H1 (cell line): ENCODE measurements at regions of chr22 and their contacts with region 1.

Region 1: DNA sequence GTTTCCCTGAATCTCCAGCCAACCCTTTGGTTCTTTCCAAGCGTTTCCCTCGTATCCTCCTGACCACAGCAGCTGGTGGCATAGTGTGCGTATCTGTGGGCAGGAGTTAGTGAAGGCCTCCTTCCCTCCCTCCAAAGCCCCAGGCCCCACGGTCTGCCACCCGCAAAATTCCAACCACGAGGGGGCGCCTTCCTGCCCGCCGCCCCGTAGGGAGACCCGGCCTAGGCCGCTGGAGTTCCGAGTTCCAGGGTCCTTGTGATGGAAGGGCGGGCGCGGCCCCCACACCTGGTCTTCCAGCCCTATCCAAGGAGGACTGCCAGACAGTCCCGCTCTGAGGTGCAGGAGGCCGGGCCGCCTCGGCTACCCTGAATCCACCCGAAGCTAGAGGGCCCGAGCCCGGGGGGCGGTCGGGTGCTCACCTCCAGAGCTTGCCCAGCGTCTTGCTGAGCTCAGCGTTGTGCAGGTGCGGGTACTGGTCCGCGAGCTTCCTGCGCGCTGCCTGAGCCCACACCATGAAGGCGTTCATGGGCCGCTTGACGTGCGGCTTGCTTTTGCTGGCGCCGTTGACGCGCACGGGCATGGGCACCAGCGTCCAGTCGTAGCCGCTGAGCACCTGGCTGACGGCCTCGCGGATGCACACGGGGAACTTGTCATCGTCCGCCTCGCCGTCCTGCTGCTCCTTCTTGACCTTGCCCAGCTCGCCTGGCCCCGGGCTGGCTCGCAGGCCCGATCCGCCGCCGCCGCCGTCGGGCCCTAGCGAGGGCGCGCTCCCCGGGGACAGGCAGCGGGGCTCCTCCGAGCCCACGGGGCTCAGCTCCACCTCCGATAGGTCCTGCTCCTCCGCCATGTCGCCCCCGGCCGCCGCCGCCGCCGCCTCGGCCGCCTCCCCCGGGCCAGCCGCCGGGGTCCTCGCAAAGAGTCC is 1.2 kb downstream of the SOX10 start:
- DNase-seq: peak in 1 of 2 experiments; percentile 96
- H3K4me3 ChIP-seq: peak overlapping the region; percentile 24 to 55 (median 40)
- H3K27ac ChIP-seq: no peak overlapping the region
- H3K4me1 ChIP-seq: peaks cover 0 to 30% (median 14%) of the 10 kb centered on the region in 4 experiments; a peak in 6 of 7 replicates
- H3K27me3 ChIP-seq: peaks cover 0 to 19% (median 12%) of the 10 kb centered on the region in 4 experiments; a peak in 5 of 7 replicates
- CTCF ChIP-seq: peak; percentile 76 to 81 (median 79)
- EP300 ChIP-seq: no peak
- POLR2A ChIP-seq: no peak
- RAD21 ChIP-seq: peak; percentile 39 to 58; a peak in 3 of 4 replicates

Region 2: GRCh38 chr22:37824674-37825641 is 158.2 kb before region 1 on chr22:
- CTCF ChIA-PET with region 1: no interaction called
- POLR2A ChIA-PET with region 1: no interaction called
- DNase-seq: peak in 1 of 2 experiments; percentile 72
- H3K4me3 ChIP-seq: peak overlapping the region; percentile 24 to 57 (median 44)
- H3K27ac ChIP-seq: no peak overlapping the region
- H3K4me1 ChIP-seq: peaks cover 5 to 25% (median 15%) of the 10 kb centered on the region in 4 experiments
- H3K27me3 ChIP-seq: peaks cover 8 to 30% (median 25%) of the 10 kb centered on the region in 4 experiments
- CTCF ChIP-seq: peak; percentile 55 to 78 (median 58)
- EP300 ChIP-seq: no peak
- POLR2A ChIP-seq: peak in 1 of 2 experiments; percentile 40; a peak in 1 of 3 replicates
- RAD21 ChIP-seq: peak in 1 of 2 experiments; percentile 26; a peak in 1 of 4 replicates

Region 3: DNA sequence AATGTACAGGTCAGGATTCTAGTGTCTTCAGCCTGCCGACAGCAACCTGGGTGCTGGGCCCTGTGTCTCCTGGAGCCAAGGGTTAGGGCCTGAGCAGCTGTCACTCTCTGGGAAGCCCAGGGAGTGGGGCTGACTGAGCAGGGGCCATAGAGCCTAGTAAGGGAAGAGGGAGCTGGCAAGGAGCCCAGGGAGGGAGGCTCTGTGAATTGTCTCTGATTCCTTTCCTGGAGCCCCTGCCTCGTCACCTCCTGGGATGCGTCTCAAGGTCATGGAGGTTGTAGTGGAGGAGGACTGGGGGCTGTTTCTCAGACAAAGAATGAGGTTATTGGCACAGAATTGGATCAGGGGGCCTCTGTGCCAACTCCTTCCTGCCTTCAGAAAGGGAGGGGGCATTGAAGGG is 10.7 kb before region 1 on chr22:
- CTCF ChIA-PET with region 1: interaction called, 27 read pairs
- POLR2A ChIA-PET with region 1: interaction called, 26 read pairs
- DNase-seq: no peak
- H3K4me3 ChIP-seq: no peak overlapping the region
- H3K27ac ChIP-seq: 0 out of 2 replicates have a peak overlapping the region, but pooled peaks have one; percentile 11
- H3K4me1 ChIP-seq: peaks cover 6 to 20% (median 11%) of the 10 kb centered on the region in 4 experiments
- H3K27me3 ChIP-seq: no peaks in the 10 kb centered on the region
- CTCF ChIP-seq: no peak
- EP300 ChIP-seq: no peak
- POLR2A ChIP-seq: no peak
- RAD21 ChIP-seq: no peak

Region 4: GRCh38 chr22:37999956-38000272 is 16.7 kb after region 1 on chr22:
- CTCF ChIA-PET with region 1: interaction called, 20 read pairs
- POLR2A ChIA-PET with region 1: interaction called, 8 read pairs
- DNase-seq: no peak
- H3K4me3 ChIP-seq: no peak overlapping the region
- H3K27ac ChIP-seq: no peak overlapping the region
- H3K4me1 ChIP-seq: peaks cover 0 to 23% (median 8%) of the 10 kb centered on the region in 4 experiments; a peak in 5 of 7 replicates
- H3K27me3 ChIP-seq: no peaks in the 10 kb centered on the region; a peak in 1 of 7 replicates
- CTCF ChIP-seq: no peak
- EP300 ChIP-seq: no peak
- POLR2A ChIP-seq: no peak
- RAD21 ChIP-seq: no peak

Region 5: DNA sequence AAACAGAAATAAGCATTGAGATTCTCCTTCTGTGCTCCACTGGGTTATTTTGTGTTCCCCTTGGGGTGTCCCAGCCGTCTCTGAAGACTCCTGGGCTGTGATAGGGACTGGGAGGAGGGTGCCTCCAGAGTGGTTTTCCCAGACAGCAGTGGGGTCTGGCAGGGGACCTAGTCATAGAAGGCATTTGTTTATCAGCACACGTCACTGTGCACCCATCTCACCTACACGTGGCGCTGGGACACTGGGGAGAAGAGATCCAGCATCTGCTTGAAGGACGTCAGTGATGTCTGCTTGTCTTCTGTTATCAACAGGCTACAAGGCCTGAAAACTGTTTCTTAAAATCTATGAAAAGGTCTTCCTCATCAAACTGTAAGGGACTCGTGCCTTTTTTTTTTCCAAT is 39.8 kb after region 1 on chr22:
- CTCF ChIA-PET with region 1: no interaction called
- POLR2A ChIA-PET with region 1: no interaction called
- DNase-seq: no peak
- H3K4me3 ChIP-seq: no peak overlapping the region
- H3K27ac ChIP-seq: no peak overlapping the region
- H3K4me1 ChIP-seq: peaks cover 0 to 9% (median 4%) of the 10 kb centered on the region in 4 experiments; a peak in 3 of 7 replicates
- H3K27me3 ChIP-seq: peaks cover 0 to under 1% (median 0%) of the 10 kb centered on the region in 4 experiments; a peak in 1 of 7 replicates
- CTCF ChIP-seq: no peak
- EP300 ChIP-seq: no peak
- POLR2A ChIP-seq: no peak
- RAD21 ChIP-seq: no peak

Region 6: DNA sequence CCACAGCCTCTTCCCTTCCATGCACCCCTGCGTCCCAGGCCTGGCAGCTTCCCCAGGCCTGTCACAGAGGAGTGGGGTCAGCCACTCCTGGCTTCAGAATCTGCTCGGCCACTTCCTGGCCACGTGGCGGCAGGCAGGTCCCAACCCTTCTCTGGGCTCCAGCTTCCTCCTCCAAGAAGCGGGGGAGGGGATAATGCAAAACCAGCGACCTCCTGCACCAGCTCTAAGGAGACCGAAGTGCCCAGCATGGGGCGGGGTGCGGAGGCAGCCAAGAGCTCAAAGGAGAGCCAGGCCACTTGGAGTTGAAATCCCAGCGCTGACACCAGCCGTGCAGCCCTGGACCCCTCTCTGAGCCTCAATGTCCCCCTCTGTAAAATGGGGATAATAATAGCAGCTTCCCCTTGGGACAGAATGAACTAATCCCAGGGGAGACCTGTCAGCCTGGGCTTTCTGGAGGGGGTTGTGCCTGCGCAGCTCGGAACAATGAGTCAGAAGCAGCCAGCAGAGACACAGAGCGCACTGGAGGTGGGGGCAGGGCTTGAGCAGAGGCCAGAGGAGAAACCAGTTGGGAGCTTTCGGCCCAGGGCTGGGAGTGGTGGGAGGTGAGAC is 51.2 kb after region 1 on chr22:
- CTCF ChIA-PET with region 1: interaction called, 11 read pairs
- POLR2A ChIA-PET with region 1: no interaction called
- DNase-seq: peak; percentile 56 to 70
- H3K4me3 ChIP-seq: peak overlapping the region in 2 of 4 experiments; percentile 4 to 19; a peak in 2 of 8 replicates
- H3K27ac ChIP-seq: peak overlapping the region; percentile 61; the same call in 1 of the 2 replicates
- H3K4me1 ChIP-seq: peaks cover 0 to 33% (median 22%) of the 10 kb centered on the region in 4 experiments; a peak in 6 of 7 replicates
- H3K27me3 ChIP-seq: peaks cover 0 to 4% (median under 1%) of the 10 kb centered on the region in 4 experiments; a peak in 1 of 7 replicates
- CTCF ChIP-seq: 0 out of 4 replicates have a peak, but pooled peaks of 1 of the 3 experiments have one; percentile 2
- EP300 ChIP-seq: 0 out of 3 replicates have a peak, but pooled peaks of 1 of the 2 experiments have one; percentile 20
- POLR2A ChIP-seq: no peak
- RAD21 ChIP-seq: peak; percentile 7 to 33; a peak in 1 of 4 replicates

Region 7: DNA sequence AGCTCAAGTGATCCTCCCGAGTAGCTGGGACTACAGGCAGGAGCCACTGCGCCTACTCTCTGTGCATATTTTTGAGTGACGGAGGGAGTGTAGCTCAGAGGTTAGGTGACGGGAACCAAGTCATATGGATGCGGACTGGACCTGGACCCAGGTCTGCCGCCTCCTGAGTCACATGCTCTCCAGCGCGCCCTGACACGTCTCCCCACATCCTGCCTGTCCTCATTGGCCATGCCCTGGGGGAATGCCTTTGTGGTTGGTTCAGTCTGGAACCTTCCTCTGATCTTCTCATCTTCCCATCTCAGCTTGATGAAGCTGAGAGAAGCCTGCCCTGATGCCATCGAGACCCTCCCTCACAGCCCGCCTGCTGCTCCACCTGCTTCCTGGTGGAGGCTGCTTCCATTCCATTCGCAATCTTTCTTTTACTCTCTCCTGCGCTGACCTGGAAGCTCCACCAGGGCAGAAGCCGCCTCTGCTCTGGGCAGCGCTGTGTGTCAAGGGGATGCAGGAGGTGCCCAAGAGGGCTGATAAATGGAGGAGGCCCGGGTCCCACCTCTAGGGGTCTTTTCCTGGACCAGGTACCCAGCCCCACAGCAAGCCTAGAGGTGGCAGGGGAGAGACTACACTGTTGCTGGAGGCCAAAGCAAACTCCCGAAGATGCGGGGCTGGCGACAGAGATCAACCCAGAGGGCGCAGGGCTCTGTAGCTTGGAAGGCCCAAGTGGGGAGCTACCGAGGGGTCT is 141.2 kb after region 1 on chr22:
- CTCF ChIA-PET with region 1: no interaction called
- POLR2A ChIA-PET with region 1: no interaction called
- DNase-seq: no peak
- H3K4me3 ChIP-seq: no peak overlapping the region
- H3K27ac ChIP-seq: no peak overlapping the region
- H3K4me1 ChIP-seq: peaks cover 0 to 3% (median 0%) of the 10 kb centered on the region in 4 experiments; a peak in 4 of 7 replicates
- H3K27me3 ChIP-seq: no peaks in the 10 kb centered on the region
- CTCF ChIP-seq: peak; percentile 44 to 68 (median 59)
- EP300 ChIP-seq: no peak
- POLR2A ChIP-seq: no peak
- RAD21 ChIP-seq: peak; percentile 17 to 44; a peak in 1 of 4 replicates